Activated T-helper 2 cell treated with anti-CD3 and anti-CD28 coated beads, Interferon-gamma antibody, Interleukin-2, Interleukin-4, amounts not matched to agents 10 μg/mL and 5 μg/mL and 100 μg/mL, durations not matched to agents 14 hours and 24 hours and 36 hours (primary cell): ENCODE measurements at regions of chr5 and their contacts with region 1.

Region 1: GRCh38 chr5:74766849-74767578 is at the starts of genes GFM2 and NSA2:
- DNase-seq: peak; percentile 91
- H3K4me3 Mint-ChIP-seq: peak within 1 kb of the TSS; percentile 100
- H3K27ac Mint-ChIP-seq: peak within 1 kb of the TSS; percentile 98
- H3K4me1 Mint-ChIP-seq: peaks cover 29% of the 10 kb centered on the region
- H3K27me3 Mint-ChIP-seq: no peaks in the 10 kb centered on the region
- total RNA-seq, gene GFM2: 32.9 and 34.6 TPM in 2 replicates
- total RNA-seq, gene NSA2: 83.9 and 91.4 TPM in 2 replicates

Region 2: GRCh38 chr5:73902327-73903051 is 864.5 kb before region 1 on chr5:
- intact Hi-C with region 1: loop called (anchors 10 kb)
- DNase-seq: no peak
- H3K4me3 Mint-ChIP-seq: no peak overlapping the region
- H3K27ac Mint-ChIP-seq: no peak overlapping the region
- H3K4me1 Mint-ChIP-seq: peaks cover 17% of the 10 kb centered on the region
- H3K27me3 Mint-ChIP-seq: peaks cover 45% of the 10 kb centered on the region

Region 3: DNA sequence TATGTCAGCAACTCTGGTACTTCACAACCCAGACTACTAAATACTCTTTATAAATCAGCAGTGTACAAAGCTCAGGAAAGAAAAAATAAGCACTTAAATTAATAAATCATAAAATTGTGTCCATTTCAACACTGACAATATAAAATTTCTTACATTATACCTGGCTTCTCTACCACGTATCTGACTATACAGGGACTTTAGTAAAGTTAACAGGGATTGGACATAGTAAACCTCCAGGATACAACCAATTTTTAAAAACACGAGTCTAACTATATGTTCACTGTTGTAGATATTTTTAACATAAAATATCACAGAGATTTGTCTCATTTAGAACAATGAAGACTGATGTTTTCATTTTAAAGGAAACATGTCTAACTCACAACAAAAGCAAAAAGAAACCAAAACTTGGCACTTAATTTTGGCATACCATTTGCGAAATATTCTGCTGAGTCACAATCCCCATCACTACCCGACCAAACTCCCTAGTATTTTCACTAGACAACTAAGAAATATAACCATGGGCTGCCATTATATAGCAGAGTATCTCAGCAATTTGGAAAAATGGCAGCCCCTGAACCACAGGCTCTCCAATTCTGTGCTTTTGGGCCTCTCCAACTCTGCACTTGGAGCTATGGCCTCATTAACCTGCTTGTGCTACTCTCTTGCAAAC is 84.8 kb after region 1 on chr5:
- intact Hi-C with region 1: loop called (anchors 2 kb)
- DNase-seq: no peak
- H3K4me3 Mint-ChIP-seq: peak overlapping the region; percentile 43
- H3K27ac Mint-ChIP-seq: peak overlapping the region; percentile 21
- H3K4me1 Mint-ChIP-seq: peaks cover 10% of the 10 kb centered on the region
- H3K27me3 Mint-ChIP-seq: no peaks in the 10 kb centered on the region

Region 4: GRCh38 chr5:74934949-74935751 is 168.1 kb after region 1 on chr5:
- intact Hi-C with region 1: loop called (anchors 5 kb)
- DNase-seq: peak; percentile 11
- H3K4me3 Mint-ChIP-seq: peak overlapping the region; percentile 33
- H3K27ac Mint-ChIP-seq: peak overlapping the region; percentile 48
- H3K4me1 Mint-ChIP-seq: peaks cover 31% of the 10 kb centered on the region
- H3K27me3 Mint-ChIP-seq: peaks cover 25% of the 10 kb centered on the region

Region 5: DNA sequence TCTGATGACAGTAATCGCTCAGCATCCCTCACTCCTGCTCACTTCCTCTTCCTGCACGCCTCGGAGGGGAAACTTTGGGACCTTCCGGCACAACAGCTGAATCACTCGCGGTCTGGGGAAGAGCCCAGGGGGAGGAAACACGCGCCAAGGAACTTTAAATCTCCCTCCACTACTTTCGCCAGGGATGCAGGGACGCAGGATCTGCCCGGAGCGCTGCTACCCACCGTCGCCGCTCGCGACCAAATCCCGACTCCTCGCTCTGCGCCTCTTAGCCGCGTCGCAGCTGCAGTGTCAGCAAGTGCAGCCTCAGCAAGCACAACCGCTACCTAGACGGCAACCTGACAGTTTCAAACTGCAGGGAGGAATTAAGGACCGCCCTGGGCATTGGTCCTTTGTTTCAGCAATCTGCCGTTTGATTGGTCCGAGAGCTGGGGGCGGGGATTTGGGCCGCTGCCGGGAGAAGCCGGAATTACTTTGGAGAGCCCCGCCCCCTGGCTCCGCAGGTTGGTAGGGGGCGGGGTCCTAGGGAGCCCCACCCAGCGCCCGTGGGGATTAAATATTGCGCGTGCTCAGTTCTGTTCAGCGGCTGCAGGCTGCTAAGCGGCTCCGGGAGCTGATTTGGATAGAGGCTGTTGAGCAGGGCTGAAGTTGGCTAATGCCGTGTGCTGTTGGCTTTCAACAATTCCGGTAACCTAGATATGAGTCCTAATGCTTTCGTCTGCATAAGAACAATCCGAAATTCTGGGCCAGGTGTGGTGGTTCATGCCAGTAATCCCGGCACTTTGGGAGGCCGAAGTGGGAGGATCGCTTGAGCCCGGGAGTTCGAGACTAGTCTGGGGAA is 950.3 kb after region 1 on chr5 and contains the start of gene POC5:
- intact Hi-C with region 1: loop called (anchors 10 kb)
- DNase-seq: peak; percentile 97
- H3K4me3 Mint-ChIP-seq: peak within 1 kb of the TSS; percentile 100
- H3K27ac Mint-ChIP-seq: peak within 1 kb of the TSS; percentile 100
- H3K4me1 Mint-ChIP-seq: peaks cover 29% of the 10 kb centered on the region
- H3K27me3 Mint-ChIP-seq: peaks cover 10% of the 10 kb centered on the region
- total RNA-seq, gene POC5: 16.2 and 16.5 TPM in 2 replicates